A673 (cell line): ENCODE measurements at regions of chr6 and their contacts with region 1.

Region 1: DNA sequence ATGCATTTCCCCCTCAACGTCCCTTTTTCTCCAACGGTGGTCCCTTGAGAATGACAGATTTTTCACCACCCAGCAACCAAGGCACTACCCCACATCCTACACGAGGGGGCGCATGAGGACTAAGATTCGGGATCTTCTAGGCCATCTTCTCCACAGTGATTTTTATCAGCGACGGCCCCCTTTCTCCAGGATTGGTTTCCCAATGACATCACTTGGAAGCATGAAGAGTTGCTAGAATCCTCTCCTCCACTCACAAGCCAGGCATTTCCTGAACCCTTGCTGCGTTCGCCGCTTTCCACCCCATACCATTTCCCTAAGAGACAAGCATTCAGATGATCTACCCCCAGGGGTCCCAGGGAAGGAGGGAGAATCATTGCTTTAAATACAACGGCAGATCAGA is 252.0 kb downstream of the HIVEP2 start:
- DNase-seq: peak; percentile 86
- H3K4me3 ChIP-seq: peak overlapping the region; percentile 10
- H3K27ac ChIP-seq: no peak overlapping the region
- H3K4me1 ChIP-seq: no peaks in the 10 kb centered on the region
- H3K27me3 ChIP-seq: no peaks in the 10 kb centered on the region
- CTCF ChIP-seq: peak; percentile 94

Region 2: GRCh38 chr6:141634269-141634668 is 1058.7 kb before region 1 on chr6:
- CTCF ChIA-PET with region 1: no interaction called
- POLR2A ChIA-PET with region 1: no interaction called
- intact Hi-C with region 1: no loop called
- DNase-seq: no peak
- H3K4me3 ChIP-seq: no peak overlapping the region
- H3K27ac ChIP-seq: peak overlapping the region; percentile 100
- H3K4me1 ChIP-seq: peaks cover 48% of the 10 kb centered on the region
- H3K27me3 ChIP-seq: no peaks in the 10 kb centered on the region
- CTCF ChIP-seq: no peak

Region 3: GRCh38 chr6:142474531-142475289 is 218.2 kb before region 1 on chr6:
- CTCF ChIA-PET with region 1: interaction called, 3 read pairs
- POLR2A ChIA-PET with region 1: no interaction called
- intact Hi-C with region 1: loop called (anchors 10 kb)
- DNase-seq: peak; percentile 65
- H3K4me3 ChIP-seq: no peak overlapping the region
- H3K27ac ChIP-seq: no peak overlapping the region
- H3K4me1 ChIP-seq: peaks cover 2% of the 10 kb centered on the region
- H3K27me3 ChIP-seq: no peaks in the 10 kb centered on the region
- CTCF ChIP-seq: peak; percentile 78

Region 4: DNA sequence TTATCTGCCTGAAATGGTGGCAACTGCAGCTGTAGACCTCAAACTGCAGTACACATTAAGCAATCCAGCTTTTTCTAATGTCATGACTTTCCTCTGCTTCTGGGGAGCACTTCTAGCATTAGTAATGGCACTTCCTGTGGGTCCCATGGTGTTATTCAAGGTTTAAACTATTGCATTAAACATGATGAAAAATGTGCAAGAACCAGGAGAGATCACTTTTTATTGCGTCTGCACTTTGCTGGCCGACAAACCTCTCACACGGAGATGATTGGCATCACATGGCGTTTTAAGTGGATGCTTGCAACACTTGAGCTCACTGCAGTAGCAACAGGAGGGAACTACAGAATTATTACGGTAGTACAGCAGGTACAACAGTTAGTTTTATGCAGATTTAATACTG is 103.6 kb after region 1 on chr6:
- CTCF ChIA-PET with region 1: no interaction called
- POLR2A ChIA-PET with region 1: no interaction called
- intact Hi-C with region 1: no loop called
- DNase-seq: peak; percentile 54
- H3K4me3 ChIP-seq: no peak overlapping the region
- H3K27ac ChIP-seq: no peak overlapping the region
- H3K4me1 ChIP-seq: no peaks in the 10 kb centered on the region
- H3K27me3 ChIP-seq: no peaks in the 10 kb centered on the region
- CTCF ChIP-seq: no peak

Region 5: DNA sequence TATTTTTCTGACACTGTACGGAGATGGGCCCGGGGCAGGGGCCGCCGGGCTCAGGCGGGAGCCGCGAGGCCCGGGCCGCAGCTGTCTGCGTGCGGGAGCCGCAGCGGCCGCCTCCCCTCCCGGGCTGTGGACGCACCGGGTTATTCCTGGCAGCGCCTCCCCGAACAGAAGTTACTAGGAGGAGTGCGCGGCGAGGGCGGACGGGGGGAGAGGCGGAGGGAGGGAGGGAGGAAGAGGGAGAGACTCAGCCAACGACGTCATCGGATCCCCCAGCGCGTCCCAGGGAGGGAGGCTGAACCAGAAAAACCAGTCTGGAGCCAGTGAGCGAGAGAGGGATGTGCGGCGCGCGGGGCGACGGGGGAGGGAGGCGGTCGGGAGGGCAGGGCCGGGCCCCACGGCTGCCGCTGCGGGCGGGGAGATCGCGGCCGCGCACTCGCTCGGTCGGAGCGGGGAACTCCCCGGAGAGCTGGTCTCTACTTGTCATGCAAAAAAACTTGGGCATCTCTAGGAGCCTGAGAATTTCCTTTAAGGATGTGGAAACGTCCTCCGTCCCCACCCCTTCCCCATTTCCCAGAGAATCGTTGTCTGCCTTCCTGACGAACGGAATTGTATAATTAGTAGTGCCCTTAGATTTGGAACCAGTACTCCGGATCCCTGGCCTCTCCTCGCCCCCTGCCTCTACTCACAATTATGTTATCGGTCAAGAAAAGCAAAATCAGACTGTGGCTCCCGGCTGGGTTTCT is 253.4 kb after region 1 on chr6:
- CTCF ChIA-PET with region 1: no interaction called
- POLR2A ChIA-PET with region 1: no interaction called
- intact Hi-C with region 1: loop called (anchors 10 kb)
- DNase-seq: peak; percentile 92
- H3K4me3 ChIP-seq: peak overlapping the region; percentile 66
- H3K27ac ChIP-seq: no peak overlapping the region
- H3K4me1 ChIP-seq: peaks cover 11% of the 10 kb centered on the region
- H3K27me3 ChIP-seq: peaks cover 6% of the 10 kb centered on the region
- CTCF ChIP-seq: no peak

Region 6: GRCh38 chr6:143026696-143027449 is 333.9 kb after region 1 on chr6:
- CTCF ChIA-PET with region 1: no interaction called
- POLR2A ChIA-PET with region 1: no interaction called
- intact Hi-C with region 1: loop called (anchors 1 kb)
- DNase-seq: peak; percentile 35
- H3K4me3 ChIP-seq: no peak overlapping the region
- H3K27ac ChIP-seq: no peak overlapping the region
- H3K4me1 ChIP-seq: no peaks in the 10 kb centered on the region
- H3K27me3 ChIP-seq: no peaks in the 10 kb centered on the region
- CTCF ChIP-seq: peak; percentile 75

Region 7: DNA sequence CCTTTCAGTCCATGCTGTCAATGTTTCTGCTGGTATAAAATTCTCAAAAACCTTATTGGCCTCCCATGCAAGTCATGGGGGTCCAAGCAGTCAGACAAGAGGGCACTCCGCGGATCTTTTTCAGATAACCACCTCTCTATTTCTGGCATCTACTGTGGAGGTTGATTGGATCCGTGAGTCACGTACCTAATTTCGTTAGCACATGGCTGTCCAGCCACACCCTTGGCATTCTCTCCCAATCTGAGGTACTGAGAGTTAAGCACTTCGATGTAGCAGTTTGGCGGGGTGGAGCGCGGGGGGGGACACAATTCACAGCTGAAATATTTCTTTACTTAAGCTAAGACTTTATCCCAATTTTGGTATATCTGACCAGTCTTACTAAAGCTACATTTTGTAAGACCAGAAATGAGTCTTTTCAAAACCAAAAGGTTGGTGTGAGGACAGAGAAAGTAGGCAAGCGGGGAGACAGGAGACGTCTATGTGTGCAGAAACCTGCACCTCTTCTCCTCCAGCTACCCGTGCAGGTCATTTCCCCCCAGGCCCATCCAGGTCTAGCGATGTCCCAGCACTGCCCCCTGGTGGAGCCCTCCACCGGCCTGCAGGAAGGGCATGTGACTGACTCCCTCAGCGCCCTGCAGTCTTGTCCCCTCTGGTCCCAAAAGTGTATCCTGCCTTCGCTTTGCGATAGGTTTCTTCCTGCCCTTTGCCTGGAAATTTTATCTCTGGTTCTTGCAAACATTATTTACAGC is 644.4 kb after region 1 on chr6:
- CTCF ChIA-PET with region 1: no interaction called
- POLR2A ChIA-PET with region 1: no interaction called
- intact Hi-C with region 1: loop called (anchors 2 kb)
- DNase-seq: peak; percentile 55
- H3K4me3 ChIP-seq: no peak overlapping the region
- H3K27ac ChIP-seq: no peak overlapping the region
- H3K4me1 ChIP-seq: no peaks in the 10 kb centered on the region
- H3K27me3 ChIP-seq: no peaks in the 10 kb centered on the region
- CTCF ChIP-seq: peak; percentile 71

Region 8: DNA sequence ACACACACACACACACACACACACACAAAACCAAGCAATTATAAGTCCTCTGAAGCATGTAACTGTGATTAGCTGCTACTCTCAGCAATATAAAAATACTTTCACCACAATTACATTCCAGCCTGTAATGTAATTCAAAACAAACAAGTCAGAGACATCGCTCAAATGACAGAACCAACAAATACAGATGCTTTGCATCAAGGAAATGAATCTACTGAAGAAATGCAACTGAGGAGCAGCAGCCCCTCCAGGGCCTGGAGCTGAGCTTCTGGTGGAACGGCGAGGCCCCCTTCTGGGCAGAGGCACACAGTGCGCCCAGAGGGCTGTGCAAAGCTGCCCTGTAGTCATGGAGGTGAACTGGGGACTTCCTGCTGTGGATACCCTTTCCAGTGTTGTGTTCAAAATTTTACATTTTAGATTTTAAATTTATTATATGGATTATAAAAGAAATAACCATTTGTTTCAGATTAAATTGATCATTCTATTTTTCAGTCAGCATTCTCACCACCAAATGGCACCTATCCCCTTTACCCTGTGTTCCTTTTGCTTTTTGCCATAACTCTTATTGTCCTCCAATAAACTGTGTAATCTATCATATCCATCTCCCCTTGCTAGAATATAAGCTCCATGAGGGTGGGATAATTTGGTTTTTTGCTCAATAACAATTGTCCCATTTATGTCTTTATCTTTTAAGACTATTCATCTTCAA is 734.3 kb after region 1 on chr6:
- CTCF ChIA-PET with region 1: interaction called, 3 read pairs
- POLR2A ChIA-PET with region 1: no interaction called
- intact Hi-C with region 1: loop called (anchors 1 kb)
- DNase-seq: peak; percentile 73
- H3K4me3 ChIP-seq: no peak overlapping the region
- H3K27ac ChIP-seq: no peak overlapping the region
- H3K4me1 ChIP-seq: no peaks in the 10 kb centered on the region
- H3K27me3 ChIP-seq: no peaks in the 10 kb centered on the region
- CTCF ChIP-seq: peak; percentile 94

Region 9: DNA sequence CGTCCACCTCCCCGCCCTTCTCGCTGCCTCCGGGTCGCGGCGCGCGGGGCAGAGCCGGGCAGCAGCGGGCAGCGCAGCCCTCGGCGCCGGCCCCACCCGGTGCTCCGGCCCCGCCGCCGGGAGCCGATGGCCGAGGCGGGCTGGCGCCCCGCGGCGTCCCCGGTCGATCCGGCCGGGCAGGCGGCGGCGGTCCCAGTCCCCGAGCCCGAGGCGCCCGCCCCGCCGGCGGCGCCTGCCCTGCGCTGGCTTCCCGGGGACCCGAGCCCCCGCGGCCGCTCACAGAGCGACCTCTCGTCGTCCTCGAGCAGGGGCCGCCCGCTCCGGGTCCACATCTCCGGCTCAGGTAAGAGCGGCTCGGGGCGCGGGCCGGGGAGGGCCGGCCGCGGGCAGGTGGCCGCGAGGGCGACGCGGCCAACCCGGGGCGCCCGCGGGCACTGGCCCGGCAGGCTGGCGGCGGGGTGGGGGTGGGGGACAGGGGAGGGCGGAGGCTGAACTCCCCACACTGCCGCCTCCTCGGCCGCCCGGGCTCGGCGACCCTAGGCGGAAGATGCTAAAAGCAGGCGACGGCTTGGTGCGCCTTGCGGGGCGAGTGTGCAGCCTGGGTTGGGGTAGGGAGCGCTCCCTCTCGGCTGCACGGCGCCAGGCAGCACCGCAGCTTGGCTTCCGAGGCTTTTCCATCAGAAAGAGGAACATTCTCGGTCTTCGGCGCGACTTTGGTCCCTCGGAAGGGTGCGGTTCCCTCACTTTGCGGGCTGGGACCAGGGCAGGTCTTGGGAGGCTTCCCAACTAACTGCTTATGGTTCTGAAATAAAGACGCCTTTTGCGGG is 844.1 kb after region 1 on chr6:
- CTCF ChIA-PET with region 1: no interaction called
- POLR2A ChIA-PET with region 1: no interaction called
- intact Hi-C with region 1: loop called (anchors 10 kb)
- DNase-seq: peak; percentile 67
- H3K4me3 ChIP-seq: peak overlapping the region; percentile 36
- H3K27ac ChIP-seq: no peak overlapping the region
- H3K4me1 ChIP-seq: no peaks in the 10 kb centered on the region
- H3K27me3 ChIP-seq: peaks cover 14% of the 10 kb centered on the region
- CTCF ChIP-seq: peak; percentile 48